Esophagus squamous epithelium (tissue), 5 donors: ENCODE measurements at regions of chr2 and their contacts with region 1.

Region 1: DNA sequence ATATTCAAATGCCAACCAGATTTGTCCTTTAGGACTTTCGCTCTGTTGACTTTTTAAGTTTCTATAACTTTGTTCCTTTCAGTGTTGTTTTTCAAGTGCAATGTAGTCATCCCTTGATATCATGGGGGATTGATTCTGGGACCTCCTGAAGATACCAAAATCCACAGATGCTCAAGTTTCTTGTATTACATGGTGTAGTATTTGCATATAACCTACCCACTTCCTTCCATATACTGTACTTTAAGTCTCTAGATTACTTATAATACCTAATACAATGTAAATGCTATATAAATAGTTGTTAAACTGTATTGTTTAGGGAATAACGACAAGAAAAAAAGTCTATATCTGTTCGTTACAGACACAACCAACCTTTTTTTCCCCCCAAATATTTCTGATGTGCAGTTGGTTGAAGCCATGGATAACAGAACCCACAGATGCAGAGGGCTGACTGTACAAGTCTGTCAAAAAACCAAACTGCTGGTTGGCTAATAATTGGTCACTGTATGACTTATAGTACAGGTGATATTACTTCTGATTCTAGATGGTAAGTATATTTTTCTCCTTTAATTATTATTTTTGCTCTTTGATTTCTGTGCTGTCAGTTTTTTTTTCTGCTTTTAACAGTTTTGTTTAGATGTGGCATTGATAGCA is 201.7 kb upstream of the STON1 start:
- DNase-seq: no peak
- H3K4me3 ChIP-seq: no peak overlapping the region
- H3K27ac ChIP-seq: no peak overlapping the region
- H3K4me1 ChIP-seq: peaks cover 0 to 47% (median 0%) of the 10 kb centered on the region in 3 donors
- H3K27me3 ChIP-seq: no peaks in the 10 kb centered on the region
- CTCF ChIP-seq: no peak
- POLR2A ChIP-seq: no peak

Region 2: GRCh38 chr2:47888581-47889280 is 439.6 kb before region 1 on chr2:
- intact Hi-C with region 1: no loop called
- DNase-seq: no peak
- H3K4me3 ChIP-seq: no peak overlapping the region
- H3K27ac ChIP-seq: no peak overlapping the region
- H3K4me1 ChIP-seq: peaks cover 0 to 57% (median 18%) of the 10 kb centered on the region in 3 donors
- H3K27me3 ChIP-seq: no peaks in the 10 kb centered on the region
- CTCF ChIP-seq: no peak
- POLR2A ChIP-seq: no peak

Region 3: DNA sequence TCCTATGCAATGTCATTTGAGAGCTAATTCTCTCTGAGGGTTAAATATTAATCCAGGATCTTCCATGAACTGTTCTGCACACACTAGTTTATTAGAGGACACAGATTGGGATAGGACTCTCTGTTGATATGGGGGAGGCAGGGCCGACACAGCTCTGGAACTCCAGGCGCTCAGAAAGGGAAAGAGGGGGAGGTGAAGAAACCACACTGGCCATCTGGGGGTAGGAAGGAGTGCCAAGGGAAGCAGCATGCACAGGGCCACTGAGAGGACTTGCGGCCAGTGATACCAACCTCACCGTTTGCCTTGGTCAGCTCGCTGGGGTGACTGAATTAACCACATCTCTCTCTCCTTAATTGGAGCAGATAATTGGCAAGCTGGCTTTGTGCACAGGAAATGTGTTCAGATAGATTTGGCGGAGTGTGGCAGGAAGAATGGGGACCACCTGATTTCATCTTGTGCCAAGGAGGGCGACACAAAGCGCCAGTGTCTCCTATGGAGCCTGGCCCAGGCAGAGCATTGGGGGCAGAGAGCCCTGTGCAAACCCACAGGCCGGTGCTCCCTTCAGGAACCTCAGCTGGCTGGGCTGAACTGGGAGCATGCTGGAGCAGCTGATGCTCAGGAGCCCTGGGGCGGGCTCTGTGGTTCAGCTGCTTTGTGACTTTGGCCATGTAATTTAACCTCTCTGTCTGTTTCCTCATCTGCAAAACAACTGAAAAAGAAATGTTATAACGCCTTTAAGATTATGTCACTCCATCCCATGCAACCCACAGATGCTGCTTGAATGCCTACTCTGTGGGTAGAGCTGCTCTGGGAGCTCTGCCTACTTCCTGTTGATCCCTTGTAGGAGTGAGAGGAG is 86.9 kb after region 1 on chr2:
- intact Hi-C with region 1: loop called (anchors 10 kb)
- DNase-seq: no peak
- H3K4me3 ChIP-seq: no peak overlapping the region
- H3K27ac ChIP-seq: peak overlapping the region in 1 of 4 donors; percentile 13
- H3K4me1 ChIP-seq: peaks cover 0 to 35% (median 14%) of the 10 kb centered on the region in 3 donors
- H3K27me3 ChIP-seq: no peaks in the 10 kb centered on the region
- CTCF ChIP-seq: no peak
- POLR2A ChIP-seq: no peak